CD8-positive, alpha-beta T cell (primary cell): ENCODE measurements at regions of chr13 and their contacts with region 1.

Region 1: DNA sequence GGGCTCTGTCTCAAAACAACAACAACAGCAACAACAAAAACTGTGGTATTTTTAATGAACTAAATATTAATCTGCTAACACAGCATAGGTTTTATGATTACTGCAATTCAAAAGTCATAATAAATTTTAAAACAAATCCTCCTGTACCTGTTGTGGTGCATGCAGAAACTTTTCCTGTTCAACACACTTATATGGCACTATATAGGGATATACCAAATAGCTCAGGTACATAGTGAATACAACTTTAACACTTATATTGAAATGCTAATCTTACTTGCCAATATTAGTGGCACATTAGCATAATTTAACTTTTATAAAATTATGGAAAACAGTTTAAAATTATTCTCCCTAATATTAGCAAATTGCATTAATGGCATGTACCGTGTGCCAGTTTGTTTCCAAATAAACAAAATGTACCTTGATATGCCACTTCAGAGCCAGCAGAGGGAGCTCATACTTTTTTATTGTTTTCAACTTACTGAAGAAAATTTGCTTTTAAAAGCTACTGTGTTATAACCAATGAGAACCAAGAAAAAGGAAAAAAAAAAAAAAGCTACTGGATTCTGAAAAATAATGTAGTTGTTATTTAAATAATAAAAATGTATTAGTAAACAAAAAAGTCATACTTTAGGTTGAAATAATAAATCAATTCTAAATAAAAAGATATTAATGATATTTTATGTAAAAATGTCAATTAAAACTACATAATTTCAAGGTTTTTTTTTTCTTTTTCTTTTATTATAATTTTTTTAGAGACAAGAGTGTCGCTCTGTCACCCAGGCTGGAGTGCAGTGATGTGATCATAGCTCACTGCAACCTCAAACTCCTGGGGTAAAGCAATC is 18.0 kb upstream of the RBM26 start:
- DNase-seq: peak in 2 of 9 experiments; percentile 60 to 71
- ATAC-seq: peak; percentile 62
- H3K4me3 ChIP-seq: no peak overlapping the region
- H3K4me3 Mint-ChIP-seq: no peak overlapping the region
- H3K27ac ChIP-seq: no peak overlapping the region
- H3K27ac Mint-ChIP-seq: no peak overlapping the region
- H3K4me1 ChIP-seq: no peaks in the 10 kb centered on the region
- H3K4me1 Mint-ChIP-seq: peaks cover 2% of the 10 kb centered on the region
- H3K27me3 ChIP-seq: no peaks in the 10 kb centered on the region
- H3K27me3 Mint-ChIP-seq: no peaks in the 10 kb centered on the region
- CTCF ChIP-seq: peak; percentile 87

Region 2: GRCh38 chr13:79060216-79060615 is 363.8 kb before region 1 on chr13:
- CTCF ChIA-PET with region 1: no interaction called
- POLR2A ChIA-PET with region 1: no interaction called
- intact Hi-C with region 1: no loop called
- DNase-seq: no peak
- ATAC-seq: no peak
- H3K4me3 ChIP-seq: no peak overlapping the region
- H3K4me3 Mint-ChIP-seq: no peak overlapping the region
- H3K27ac ChIP-seq: no peak overlapping the region
- H3K27ac Mint-ChIP-seq: no peak overlapping the region
- H3K4me1 ChIP-seq: no peaks in the 10 kb centered on the region
- H3K4me1 Mint-ChIP-seq: no peaks in the 10 kb centered on the region
- H3K27me3 ChIP-seq: no peaks in the 10 kb centered on the region
- H3K27me3 Mint-ChIP-seq: peaks cover 12% of the 10 kb centered on the region
- CTCF ChIP-seq: no peak

Region 3: DNA sequence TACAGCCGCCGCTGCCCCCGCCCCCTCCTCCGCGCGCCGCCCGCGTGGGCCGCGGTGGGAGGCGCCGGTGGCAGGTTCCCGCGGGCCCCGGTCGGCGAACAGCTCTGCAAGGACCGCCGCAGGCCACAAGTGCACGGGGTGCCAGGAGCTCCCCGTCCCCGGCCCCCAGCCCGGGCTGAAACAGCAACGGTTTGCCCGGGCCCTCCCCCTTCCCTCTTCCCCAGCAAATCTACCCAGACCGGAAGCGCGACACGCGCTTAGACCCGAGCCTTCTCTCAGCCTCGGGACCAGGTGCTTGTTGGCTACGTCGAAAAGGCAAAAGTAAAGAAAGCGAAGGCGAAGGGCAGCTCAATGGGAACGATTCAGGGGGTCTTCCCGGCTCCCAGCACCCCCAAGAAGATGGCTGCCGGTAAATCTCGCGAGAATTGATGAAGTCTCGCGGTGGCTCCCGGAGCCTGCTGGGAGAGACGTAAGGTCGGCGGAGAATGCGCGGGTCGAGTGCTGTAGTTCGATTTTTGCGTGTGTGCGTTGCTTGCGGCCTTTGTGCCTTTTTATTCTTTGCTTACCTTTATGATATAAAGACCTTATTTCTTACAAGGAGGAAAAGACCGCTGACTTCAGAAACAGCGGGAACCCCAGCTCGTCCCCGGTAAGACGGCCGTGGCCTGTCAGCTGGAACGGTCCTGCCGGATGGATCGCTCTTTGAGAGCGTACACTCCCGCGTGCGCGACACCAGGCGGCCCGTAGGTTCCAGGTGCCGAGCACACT is 18.0 kb before region 1 on chr13 and contains the start of gene RBM26:
- CTCF ChIA-PET with region 1: interaction called, 8 read pairs
- POLR2A ChIA-PET with region 1: interaction called, 4 read pairs
- intact Hi-C with region 1: loop called in 1 of 2 experiments (anchors 2 kb)
- DNase-seq: peak; percentile 86 to 98 (median 93)
- ATAC-seq: peak; percentile 89
- H3K4me3 ChIP-seq: peak within 1 kb of the TSS; percentile 84 to 89
- H3K4me3 Mint-ChIP-seq: peak within 1 kb of the TSS; percentile 96
- H3K27ac ChIP-seq: peak within 1 kb of the TSS; percentile 89 to 92
- H3K27ac Mint-ChIP-seq: peak within 1 kb of the TSS; percentile 99
- H3K4me1 ChIP-seq: peaks cover 56% of the 10 kb centered on the region
- H3K4me1 Mint-ChIP-seq: peaks cover 30% of the 10 kb centered on the region
- H3K27me3 ChIP-seq: no peaks in the 10 kb centered on the region
- H3K27me3 Mint-ChIP-seq: no peaks in the 10 kb centered on the region
- CTCF ChIP-seq: peak; percentile 24
- total RNA-seq, gene RBM26: 55.7 to 61.1 TPM

Region 4: DNA sequence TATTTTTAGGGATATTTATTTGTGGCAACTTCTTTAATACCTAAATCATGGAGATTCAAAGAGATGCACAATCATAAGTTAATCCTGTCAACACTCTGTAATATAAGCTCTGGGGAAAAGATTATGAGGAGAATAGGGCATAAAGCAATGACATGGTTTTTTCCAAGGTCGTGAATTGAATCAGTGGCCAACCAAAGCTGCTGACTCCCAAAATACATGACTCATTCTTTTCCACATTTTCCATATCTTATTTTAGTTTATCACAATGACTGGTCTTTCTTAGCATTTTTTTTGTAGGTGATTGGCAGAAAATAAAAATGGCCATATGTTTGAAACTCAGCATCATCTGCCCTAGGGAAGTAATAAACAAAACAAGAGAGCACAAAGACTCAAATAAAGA is 10.5 kb after region 1 on chr13:
- CTCF ChIA-PET with region 1: interaction called, 13 read pairs
- POLR2A ChIA-PET with region 1: no interaction called
- intact Hi-C with region 1: no loop called
- DNase-seq: no peak
- ATAC-seq: no peak
- H3K4me3 ChIP-seq: no peak overlapping the region
- H3K4me3 Mint-ChIP-seq: no peak overlapping the region
- H3K27ac ChIP-seq: no peak overlapping the region
- H3K27ac Mint-ChIP-seq: no peak overlapping the region
- H3K4me1 ChIP-seq: no peaks in the 10 kb centered on the region
- H3K4me1 Mint-ChIP-seq: no peaks in the 10 kb centered on the region
- H3K27me3 ChIP-seq: no peaks in the 10 kb centered on the region
- H3K27me3 Mint-ChIP-seq: no peaks in the 10 kb centered on the region
- CTCF ChIP-seq: no peak

Region 5: GRCh38 chr13:79451500-79451962 is 27.5 kb after region 1 on chr13:
- CTCF ChIA-PET with region 1: interaction called, 8 read pairs
- POLR2A ChIA-PET with region 1: no interaction called
- intact Hi-C with region 1: loop called in 1 of 2 experiments (anchors 2 kb)
- DNase-seq: peak; percentile 60 to 93 (median 83)
- ATAC-seq: peak; percentile 99
- H3K4me3 ChIP-seq: no peak overlapping the region
- H3K4me3 Mint-ChIP-seq: peak overlapping the region; percentile 6
- H3K27ac ChIP-seq: peak overlapping the region in 1 of 2 experiments; percentile 22
- H3K27ac Mint-ChIP-seq: peak overlapping the region; percentile 88
- H3K4me1 ChIP-seq: peaks cover 26% of the 10 kb centered on the region
- H3K4me1 Mint-ChIP-seq: peaks cover 34% of the 10 kb centered on the region
- H3K27me3 ChIP-seq: no peaks in the 10 kb centered on the region
- H3K27me3 Mint-ChIP-seq: no peaks in the 10 kb centered on the region
- CTCF ChIP-seq: no peak

Region 6: GRCh38 chr13:79480954-79481684 is 57.1 kb after region 1 on chr13 and contains the start of gene NDFIP2:
- CTCF ChIA-PET with region 1: interaction called, 15 read pairs
- POLR2A ChIA-PET with region 1: interaction called, 9 read pairs
- intact Hi-C with region 1: loop called in 1 of 2 experiments (anchors 10 kb)
- DNase-seq: peak; percentile 69 to 91 (median 84)
- ATAC-seq: peak; percentile 80
- H3K4me3 ChIP-seq: peak within 1 kb of the TSS; percentile 61 to 71
- H3K4me3 Mint-ChIP-seq: peak within 1 kb of the TSS; percentile 85
- H3K27ac ChIP-seq: peak within 1 kb of the TSS; percentile 29 to 33
- H3K27ac Mint-ChIP-seq: peak within 1 kb of the TSS; percentile 82
- H3K4me1 ChIP-seq: peaks cover 21% of the 10 kb centered on the region
- H3K4me1 Mint-ChIP-seq: peaks cover 29% of the 10 kb centered on the region
- H3K27me3 ChIP-seq: no peaks in the 10 kb centered on the region
- H3K27me3 Mint-ChIP-seq: no peaks in the 10 kb centered on the region
- CTCF ChIP-seq: no peak
- total RNA-seq, gene NDFIP2: 2.6 TPM

Region 7: GRCh38 chr13:79533781-79534400 is 109.9 kb after region 1 on chr13:
- CTCF ChIA-PET with region 1: interaction called, 105 read pairs
- POLR2A ChIA-PET with region 1: no interaction called
- intact Hi-C with region 1: no loop called
- DNase-seq: no peak
- ATAC-seq: no peak
- H3K4me3 ChIP-seq: no peak overlapping the region
- H3K4me3 Mint-ChIP-seq: no peak overlapping the region
- H3K27ac ChIP-seq: no peak overlapping the region
- H3K27ac Mint-ChIP-seq: no peak overlapping the region
- H3K4me1 ChIP-seq: no peaks in the 10 kb centered on the region
- H3K4me1 Mint-ChIP-seq: no peaks in the 10 kb centered on the region
- H3K27me3 ChIP-seq: no peaks in the 10 kb centered on the region
- H3K27me3 Mint-ChIP-seq: no peaks in the 10 kb centered on the region
- CTCF ChIP-seq: no peak

Region 8: GRCh38 chr13:79541426-79542049 is 117.5 kb after region 1 on chr13:
- CTCF ChIA-PET with region 1: interaction called, 105 read pairs
- POLR2A ChIA-PET with region 1: interaction called, 6 read pairs
- intact Hi-C with region 1: loop called (anchors 1 kb)
- DNase-seq: peak in 3 of 9 experiments; percentile 13 to 80 (median 75)
- ATAC-seq: peak; percentile 71
- H3K4me3 ChIP-seq: no peak overlapping the region
- H3K4me3 Mint-ChIP-seq: no peak overlapping the region
- H3K27ac ChIP-seq: no peak overlapping the region
- H3K27ac Mint-ChIP-seq: no peak overlapping the region
- H3K4me1 ChIP-seq: no peaks in the 10 kb centered on the region
- H3K4me1 Mint-ChIP-seq: no peaks in the 10 kb centered on the region
- H3K27me3 ChIP-seq: no peaks in the 10 kb centered on the region
- H3K27me3 Mint-ChIP-seq: no peaks in the 10 kb centered on the region
- CTCF ChIP-seq: peak; percentile 95